PC-3 (cell line): ENCODE measurements at regions of chr7 and their contacts with region 1.

Region 1: DNA sequence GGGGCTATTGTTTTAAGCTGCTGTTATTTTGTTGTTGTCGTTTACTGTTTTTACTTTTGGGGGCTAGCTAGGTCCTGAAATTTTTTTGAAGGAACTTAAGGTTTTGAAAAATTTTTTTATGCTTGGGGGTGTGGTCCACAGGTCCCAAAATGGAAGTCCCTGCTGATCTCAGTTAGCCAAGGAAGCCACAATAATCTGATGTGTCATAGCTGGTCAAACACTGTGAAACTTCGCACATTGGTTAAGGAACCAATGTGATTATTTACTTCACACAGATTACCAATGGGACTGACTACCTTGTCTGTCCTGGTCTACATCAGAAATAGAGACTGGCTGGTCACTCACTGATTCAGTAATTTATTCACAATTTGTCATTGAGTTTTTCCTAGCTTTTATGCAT is 29.5 kb upstream of the HYCC1 start:
- DNase-seq: peak; percentile 53
- ATAC-seq: peak; percentile 75
- H3K4me3 ChIP-seq: no peak overlapping the region
- H3K27ac ChIP-seq: no peak overlapping the region
- H3K4me1 ChIP-seq: no peaks in the 10 kb centered on the region
- H3K27me3 ChIP-seq: no peaks in the 10 kb centered on the region
- CTCF ChIP-seq: no peak

Region 2: DNA sequence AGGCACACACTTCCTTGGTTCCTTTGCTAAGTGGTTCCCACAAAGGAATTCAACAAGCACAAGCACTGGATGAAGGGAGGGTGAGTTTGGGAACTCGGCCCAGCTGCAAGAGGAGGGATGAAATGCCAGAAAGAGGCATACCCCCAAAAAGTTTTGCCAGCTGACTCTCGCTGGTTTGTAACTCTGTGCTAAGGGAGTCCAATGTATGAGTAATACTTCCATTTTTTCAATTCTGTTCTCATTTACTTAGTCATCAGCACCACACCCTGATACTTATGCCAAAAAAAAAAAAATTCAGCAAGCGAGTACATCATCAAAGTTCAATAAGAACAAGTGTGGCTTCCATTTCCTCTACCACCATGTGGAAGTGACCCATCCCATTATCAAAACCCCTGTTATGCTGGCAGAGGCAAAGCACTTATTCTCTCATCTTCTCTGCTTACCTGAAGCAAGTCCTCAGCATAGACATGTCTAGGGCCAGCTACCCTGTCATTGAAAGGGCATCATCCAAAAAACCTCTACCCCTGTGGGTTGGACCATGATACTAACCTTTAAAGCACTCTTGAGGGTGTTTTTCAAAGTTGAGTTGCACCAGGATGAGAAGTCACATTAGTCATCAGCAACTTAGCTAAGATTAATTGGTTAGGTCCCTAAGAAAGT is 22.6 kb before region 1 on chr7:
- CTCF ChIA-PET with region 1: no interaction called
- POLR2A ChIA-PET with region 1: no interaction called
- intact Hi-C with region 1: loop called (anchors 2 kb)
- DNase-seq: peak; percentile 87
- ATAC-seq: peak; percentile 74
- H3K4me3 ChIP-seq: peak overlapping the region; percentile 41; the same call in 1 of the 2 replicates
- H3K27ac ChIP-seq: peak overlapping the region; percentile 95
- H3K4me1 ChIP-seq: peaks cover 40% of the 10 kb centered on the region
- H3K27me3 ChIP-seq: no peaks in the 10 kb centered on the region
- CTCF ChIP-seq: no peak